ENCODE measurements at regions of chr17 and their contacts with region 1.

Region 1: DNA sequence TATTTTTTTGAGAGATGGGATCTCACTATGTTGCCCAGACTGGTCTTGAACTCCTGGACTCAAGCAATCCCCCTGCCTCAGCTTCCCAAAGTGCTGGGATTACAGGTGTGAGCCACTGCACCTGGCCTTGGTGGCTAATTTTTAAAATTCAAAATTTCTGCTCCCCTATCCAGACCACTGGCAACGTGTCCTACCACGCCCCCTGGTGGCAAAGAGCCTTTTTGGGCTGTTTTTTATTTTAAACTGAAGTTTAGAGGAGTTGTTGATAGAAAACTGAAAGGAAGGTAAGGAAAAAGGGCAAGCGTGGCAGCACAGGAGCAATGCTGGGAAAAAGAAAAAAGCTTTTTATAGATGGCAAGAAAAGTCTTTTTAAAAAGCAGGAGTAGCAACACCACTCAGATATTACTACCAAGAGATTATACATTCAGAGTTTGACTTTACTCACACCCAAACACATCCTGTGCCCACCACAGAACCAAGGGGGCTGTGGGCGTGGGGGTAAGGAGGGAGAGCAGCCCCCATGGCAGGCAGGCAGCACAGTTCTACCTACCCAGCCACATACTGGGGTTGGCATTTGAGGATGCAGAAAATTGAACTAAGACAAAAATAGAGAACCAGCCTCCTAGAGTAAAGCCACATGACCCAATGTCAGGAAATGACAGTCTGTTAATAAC is 4.2 kb upstream of the MXRA7 start:
- DNase-seq: peak in 1 of 2 experiments; percentile 61
- H3K4me3 ChIP-seq: no peak overlapping the region
- H3K27ac ChIP-seq: no peak overlapping the region
- H3K4me1 ChIP-seq: 0 out of 2 replicates have a peak, but pooled peaks cover 6% of the 10 kb centered on the region
- H3K27me3 ChIP-seq: no peaks in the 10 kb centered on the region
- CTCF ChIP-seq: peak; percentile 86

Region 2: DNA sequence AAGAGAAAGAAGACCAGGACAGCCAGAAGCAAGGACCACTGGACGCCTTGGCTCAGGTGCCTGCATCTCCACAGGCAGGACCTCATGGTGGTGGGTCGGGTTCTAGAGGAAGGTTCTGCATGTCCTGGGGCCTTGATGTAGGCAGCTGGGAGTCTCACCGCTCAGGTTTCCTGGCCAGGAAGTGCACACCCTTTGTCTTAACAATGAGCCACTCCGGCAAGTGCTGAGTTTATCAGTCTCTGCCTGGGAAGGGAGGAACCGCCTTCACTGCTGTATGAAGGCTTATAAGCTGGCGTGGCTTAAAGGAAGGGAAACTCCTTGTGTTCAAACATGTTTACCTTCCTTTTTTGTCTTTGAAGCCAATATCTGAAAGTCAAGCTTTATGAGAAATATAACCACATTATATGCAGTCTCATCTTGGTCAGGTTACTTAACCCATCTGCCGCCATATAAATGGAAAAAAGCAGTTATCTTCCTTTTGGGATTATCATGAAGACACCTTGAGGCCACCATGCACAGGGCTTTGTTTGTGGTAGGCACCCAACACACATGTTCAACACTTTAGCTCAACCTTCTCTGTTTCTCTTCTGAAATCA is 71.3 kb before region 1 on chr17 and contains the start of gene ST6GALNAC1:
- CTCF ChIA-PET with region 1: interaction called, 11 read pairs
- POLR2A ChIA-PET with region 1: no interaction called
- intact Hi-C with region 1: no loop called
- DNase-seq: peak in 1 of 2 experiments; percentile 39
- H3K4me3 ChIP-seq: no peak within 1 kb of the TSS
- H3K27ac ChIP-seq: no peak within 1 kb of the TSS
- H3K4me1 ChIP-seq: peaks cover 12% of the 10 kb centered on the region
- H3K27me3 ChIP-seq: no peaks in the 10 kb centered on the region
- CTCF ChIP-seq: no peak
- total RNA-seq, gene ST6GALNAC1: 0.75 and 0.76 TPM in 2 replicates